K562 (cell line): ENCODE measurements at regions of chr19 and their contacts with region 1.

Region 1: DNA sequence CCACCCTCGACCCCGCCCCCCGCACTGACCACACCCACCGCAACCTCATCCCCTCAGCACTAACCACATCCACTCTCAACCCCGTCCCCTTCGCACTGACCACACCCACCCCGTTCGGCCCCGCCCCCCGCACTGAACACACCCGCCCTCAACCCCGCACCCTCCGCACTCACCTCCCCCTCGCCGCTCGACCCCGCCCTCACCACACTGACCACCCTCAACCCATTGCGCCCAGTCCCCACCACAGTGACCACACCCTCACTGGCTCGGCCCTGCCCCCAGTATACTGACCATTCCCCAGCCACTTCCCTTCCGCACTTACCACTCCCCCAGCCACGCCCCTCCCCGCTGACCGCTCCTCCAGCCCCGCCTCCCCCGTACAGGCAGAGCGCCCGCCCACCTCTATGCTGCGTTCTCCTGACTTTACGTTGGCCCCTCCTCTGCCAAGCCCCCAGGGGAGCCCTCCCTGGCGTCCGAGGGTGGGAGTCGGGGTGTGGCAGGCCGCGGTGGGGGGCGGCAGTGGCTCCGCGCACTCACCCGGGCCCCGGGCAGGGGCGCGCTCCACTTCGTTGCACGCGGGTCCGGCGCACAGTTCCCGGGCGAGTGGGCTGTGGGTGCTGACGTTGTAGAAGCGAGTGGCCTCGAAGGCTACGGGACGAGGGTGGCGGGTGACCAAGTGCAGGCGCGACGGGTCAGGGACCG is 8.5 kb downstream of the F2RL3 start:
- DNase-seq: peak; percentile 96 to 99 (median 96)
- ATAC-seq: peak; percentile 86
- H3K4me3 ChIP-seq: peak overlapping the region; percentile 71
- H3K27ac ChIP-seq: peak overlapping the region; percentile 88
- H3K4me1 ChIP-seq: peaks cover 14 to 61% of the 10 kb centered on the region in 2 experiments
- H3K27me3 ChIP-seq: no peaks in the 10 kb centered on the region
- CTCF ChIP-seq: no peak
- EP300 ChIP-seq: no peak
- POLR2A ChIP-seq: peak; percentile 77
- RAD21 ChIP-seq: no peak

Region 2: DNA sequence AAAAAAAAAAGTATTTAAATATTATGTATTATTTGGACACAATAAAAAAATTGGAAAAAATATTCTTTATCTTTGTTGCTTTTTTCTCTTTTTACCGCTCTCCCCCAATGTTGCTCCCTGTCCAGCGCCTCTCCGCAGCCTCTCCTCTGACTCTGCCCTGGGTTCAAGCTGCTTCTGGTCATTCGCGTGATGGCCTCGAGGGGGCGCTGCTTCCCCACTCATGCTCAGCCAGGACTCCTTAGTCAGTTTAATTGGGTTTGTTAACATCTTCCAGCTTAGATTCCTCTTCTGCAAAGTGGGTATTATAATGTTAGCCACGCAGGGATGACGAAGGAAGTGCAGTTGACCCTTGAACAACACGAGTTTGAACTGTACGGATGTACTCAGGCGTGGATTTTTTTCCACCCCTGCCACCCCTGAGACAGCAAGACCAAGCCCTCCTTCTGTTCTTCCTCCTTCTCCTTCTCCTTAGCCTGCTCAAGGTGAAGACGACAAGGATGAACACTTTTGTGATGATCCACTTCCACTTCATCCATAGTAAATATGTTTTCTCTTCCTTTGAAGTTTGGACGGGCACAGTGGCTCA is 182.5 kb before region 1 on chr19:
- CTCF ChIA-PET with region 1: interaction called, 5 read pairs
- POLR2A ChIA-PET with region 1: no interaction called
- in situ Hi-C with region 1: no loop called
- intact Hi-C with region 1: loop called (anchors 5 kb)
- DNase-seq: peak; percentile 65 to 81 (median 78)
- ATAC-seq: peak; percentile 97
- H3K4me3 ChIP-seq: no peak overlapping the region
- H3K27ac ChIP-seq: no peak overlapping the region
- H3K4me1 ChIP-seq: no peaks in the 10 kb centered on the region
- H3K27me3 ChIP-seq: peaks cover 0 to 4% of the 10 kb centered on the region in 2 experiments; a peak in 2 of 5 replicates
- CTCF ChIP-seq: peak; percentile 80 to 96 (median 86)
- EP300 ChIP-seq: no peak
- POLR2A ChIP-seq: no peak
- RAD21 ChIP-seq: peak; percentile 57 to 81

Region 3: DNA sequence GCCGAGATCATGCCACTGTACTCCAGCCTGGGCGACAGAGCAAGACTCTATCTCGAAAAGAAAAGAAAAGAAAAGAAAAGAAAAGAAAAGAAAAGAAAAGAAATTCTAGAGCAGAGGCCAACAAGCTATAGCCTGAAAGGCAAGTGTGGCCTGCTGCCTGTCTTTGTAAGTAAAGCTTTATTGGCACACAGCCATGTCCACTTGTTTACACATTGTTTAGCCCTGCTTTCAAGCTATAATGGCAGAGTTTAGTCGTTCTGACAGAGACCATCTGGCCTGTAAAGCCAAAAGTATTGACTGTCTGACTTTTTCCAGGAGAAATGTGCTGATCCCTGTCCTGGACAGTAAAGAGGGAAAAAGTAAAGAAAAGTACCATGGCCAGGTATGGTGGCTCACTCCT is 159.4 kb before region 1 on chr19:
- CTCF ChIA-PET with region 1: no interaction called
- POLR2A ChIA-PET with region 1: no interaction called
- in situ Hi-C with region 1: no loop called
- intact Hi-C with region 1: no loop called
- DNase-seq: no peak
- ATAC-seq: no peak
- H3K4me3 ChIP-seq: no peak overlapping the region
- H3K27ac ChIP-seq: no peak overlapping the region
- H3K4me1 ChIP-seq: no peaks in the 10 kb centered on the region; a peak in 1 of 5 replicates
- H3K27me3 ChIP-seq: peaks cover 2 to 5% of the 10 kb centered on the region in 2 experiments; a peak in 2 of 5 replicates
- CTCF ChIP-seq: no peak
- EP300 ChIP-seq: no peak
- POLR2A ChIP-seq: no peak
- RAD21 ChIP-seq: no peak

Region 4: GRCh38 chr19:16778796-16779411 is 118.4 kb before region 1 on chr19:
- CTCF ChIA-PET with region 1: interaction called, 29 read pairs
- POLR2A ChIA-PET with region 1: no interaction called
- in situ Hi-C with region 1: no loop called
- intact Hi-C with region 1: loop called (anchors 1 kb)
- DNase-seq: peak; percentile 65 to 80 (median 72)
- ATAC-seq: peak; percentile 98
- H3K4me3 ChIP-seq: no peak overlapping the region
- H3K27ac ChIP-seq: no peak overlapping the region
- H3K4me1 ChIP-seq: no peaks in the 10 kb centered on the region
- H3K27me3 ChIP-seq: peaks cover 2 to 4% of the 10 kb centered on the region in 2 experiments; a peak in 2 of 5 replicates
- CTCF ChIP-seq: peak; percentile 83 to 92 (median 92)
- EP300 ChIP-seq: no peak
- POLR2A ChIP-seq: no peak
- RAD21 ChIP-seq: peak; percentile 83 to 95

Region 5: DNA sequence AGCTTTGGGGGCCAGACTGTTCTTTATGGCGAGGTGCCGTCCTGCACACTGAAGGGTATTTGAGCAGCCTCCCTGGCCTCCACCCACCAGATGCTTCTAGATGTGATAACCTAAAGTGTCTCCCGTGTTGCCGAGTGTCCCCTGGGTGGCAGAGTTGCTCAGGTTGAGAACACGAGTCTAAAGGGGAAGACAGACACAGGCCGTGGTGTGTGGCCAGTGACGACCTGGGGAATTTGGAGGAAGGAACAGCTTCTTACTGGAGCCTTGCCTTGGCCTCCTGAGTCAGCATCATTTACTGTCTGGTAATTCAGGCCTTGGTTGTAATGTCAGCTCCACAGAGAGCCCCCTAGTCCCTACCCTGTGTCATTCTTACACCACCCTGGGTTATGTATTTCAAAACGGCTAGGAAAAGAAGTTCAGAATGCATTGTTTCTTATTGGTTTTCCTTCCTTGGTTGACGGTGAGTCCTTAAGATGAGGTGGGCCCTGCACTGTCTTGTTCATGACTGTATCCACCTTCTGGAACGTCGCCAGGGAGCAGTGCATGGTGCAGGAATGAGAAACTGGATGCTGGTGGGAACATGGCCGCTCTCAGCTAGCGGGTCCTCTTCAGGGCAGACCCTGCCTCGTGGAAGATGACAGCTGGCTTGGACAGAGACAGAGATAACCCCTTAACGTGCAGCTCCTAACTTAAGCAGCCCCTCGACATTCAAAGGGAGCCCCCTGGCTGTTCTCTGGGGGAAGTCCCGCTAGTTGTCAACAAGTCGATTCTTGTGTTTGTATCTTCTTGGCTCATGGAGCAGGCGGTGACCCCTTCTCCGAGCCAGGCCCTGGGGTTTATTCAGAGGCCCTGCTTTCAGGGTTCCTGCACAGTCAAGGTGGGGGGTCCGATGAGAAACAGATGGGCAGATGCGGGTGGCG is 60.9 kb before region 1 on chr19:
- CTCF ChIA-PET with region 1: interaction called, 3 read pairs
- POLR2A ChIA-PET with region 1: interaction called, 3 read pairs
- in situ Hi-C with region 1: no loop called
- intact Hi-C with region 1: loop called (anchors 1 kb)
- DNase-seq: peak in 2 of 4 experiments; percentile 48 to 72
- ATAC-seq: peak; percentile 95
- H3K4me3 ChIP-seq: no peak overlapping the region
- H3K27ac ChIP-seq: no peak overlapping the region
- H3K4me1 ChIP-seq: peaks cover 0 to 3% of the 10 kb centered on the region in 2 experiments; a peak in 2 of 5 replicates
- H3K27me3 ChIP-seq: no peaks in the 10 kb centered on the region
- CTCF ChIP-seq: peak; percentile 41 to 60 (median 57); a peak in 5 of 6 replicates
- EP300 ChIP-seq: no peak
- POLR2A ChIP-seq: no peak
- RAD21 ChIP-seq: peak in 1 of 2 experiments; percentile 62; a peak in 2 of 4 replicates

Region 6: DNA sequence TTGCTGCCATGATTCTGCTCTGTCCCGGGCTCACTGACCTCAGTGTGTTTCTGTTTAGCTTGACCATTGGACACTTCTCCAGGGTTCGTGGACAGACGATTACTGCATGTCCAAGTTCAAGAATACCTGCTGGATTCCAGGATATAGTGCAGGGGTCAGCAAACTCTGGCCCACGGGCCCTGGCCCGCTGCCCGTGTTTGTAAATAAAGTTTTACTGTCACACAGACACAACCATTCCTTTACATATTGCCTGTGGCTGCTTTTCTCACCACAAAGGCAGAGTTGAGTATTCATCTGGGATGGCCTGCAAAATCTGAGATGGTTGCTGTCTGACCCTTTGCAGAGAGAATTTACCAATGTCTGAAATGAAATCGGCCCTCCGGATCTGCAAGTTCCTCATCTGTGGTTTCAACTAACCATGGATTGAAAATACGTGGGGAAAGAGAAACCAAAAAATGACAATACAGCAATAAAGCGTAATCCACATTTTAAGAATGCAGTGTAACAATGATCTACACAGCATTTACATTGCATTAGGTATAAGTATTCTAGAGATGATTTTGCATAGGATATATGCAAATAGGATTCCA is 34.4 kb before region 1 on chr19:
- CTCF ChIA-PET with region 1: no interaction called
- POLR2A ChIA-PET with region 1: no interaction called
- in situ Hi-C with region 1: no loop called
- intact Hi-C with region 1: no loop called
- DNase-seq: no peak
- ATAC-seq: no peak
- H3K4me3 ChIP-seq: no peak overlapping the region
- H3K27ac ChIP-seq: no peak overlapping the region
- H3K4me1 ChIP-seq: peaks cover 0 to 13% of the 10 kb centered on the region in 2 experiments; a peak in 1 of 5 replicates
- H3K27me3 ChIP-seq: no peaks in the 10 kb centered on the region
- CTCF ChIP-seq: no peak
- EP300 ChIP-seq: no peak
- POLR2A ChIP-seq: no peak
- RAD21 ChIP-seq: no peak

Region 7: DNA sequence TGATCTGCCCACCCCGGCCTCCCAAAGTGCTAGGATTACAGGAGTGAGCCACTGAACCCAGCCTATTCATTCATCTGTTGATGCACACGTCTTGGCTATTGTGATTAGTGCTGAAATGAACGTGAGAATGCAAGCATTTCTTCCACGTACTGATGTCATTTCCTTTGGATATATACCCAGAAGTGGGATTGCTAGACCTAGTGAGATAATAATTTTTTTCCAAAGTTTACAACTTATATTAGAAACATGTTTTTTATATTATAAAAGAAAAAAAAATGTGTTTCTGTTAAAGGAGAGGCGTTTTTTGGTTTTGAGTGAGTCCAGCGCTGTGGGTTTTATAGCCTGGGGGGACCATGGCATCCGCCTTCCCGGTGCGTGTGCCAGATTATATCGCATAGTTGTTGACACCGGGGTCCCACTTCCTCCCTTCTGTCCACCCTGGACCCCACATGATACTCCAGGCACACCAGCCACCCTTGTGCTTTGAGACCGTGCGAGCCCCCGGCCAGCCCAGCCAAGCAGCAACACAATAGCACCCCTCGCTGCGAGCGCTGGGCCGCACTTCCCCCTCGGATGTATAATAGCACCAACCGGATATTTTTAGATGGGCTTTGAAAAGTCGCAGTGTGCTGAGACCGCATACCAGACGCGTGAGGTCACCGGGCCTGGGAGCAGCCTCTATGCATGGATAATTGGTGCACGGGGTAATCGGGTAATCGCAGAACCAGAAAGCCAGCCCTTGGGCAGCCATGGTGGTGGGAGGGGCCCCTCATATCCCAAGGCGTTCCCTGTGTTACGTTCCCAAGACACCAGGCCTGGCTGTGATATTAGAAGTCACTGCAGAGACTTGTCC is 237.9 kb after region 1 on chr19:
- CTCF ChIA-PET with region 1: no interaction called
- POLR2A ChIA-PET with region 1: no interaction called
- in situ Hi-C with region 1: no loop called
- intact Hi-C with region 1: no loop called
- DNase-seq: no peak
- ATAC-seq: no peak
- H3K4me3 ChIP-seq: no peak overlapping the region
- H3K27ac ChIP-seq: no peak overlapping the region; the same call in 2 of the 3 replicates
- H3K4me1 ChIP-seq: peaks cover 4 to 10% of the 10 kb centered on the region in 2 experiments; a peak in 2 of 5 replicates
- H3K27me3 ChIP-seq: no peaks in the 10 kb centered on the region
- CTCF ChIP-seq: no peak
- EP300 ChIP-seq: no peak
- POLR2A ChIP-seq: no peak
- RAD21 ChIP-seq: no peak